ENCODE measurements at regions of chr6 and their contacts with region 1.

Region 1: GRCh38 chr6:39302669-39303424 is 11.4 kb downstream of the KCNK17 start:
- DNase-seq: peak; percentile 82 to 91
- ATAC-seq: peak; percentile 93 to 100 (median 100)
- H3K4me3 ChIP-seq: no peak overlapping the region
- H3K4me3 Mint-ChIP-seq: peak overlapping the region; percentile 57
- H3K27ac ChIP-seq: no peak overlapping the region
- H3K27ac Mint-ChIP-seq: peak overlapping the region in 1 of 2 donors; percentile 60
- H3K4me1 ChIP-seq: peaks cover 6% of the 10 kb centered on the region
- H3K4me1 Mint-ChIP-seq: peaks cover 0 to 11% of the 10 kb centered on the region in 2 donors
- H3K27me3 ChIP-seq: no peaks in the 10 kb centered on the region
- H3K27me3 Mint-ChIP-seq: peaks cover 0 to 2% of the 10 kb centered on the region in 2 donors
- CTCF ChIP-seq: peak; percentile 89

Region 2: GRCh38 chr6:39003072-39003471 is 299.8 kb before region 1 on chr6:
- intact Hi-C with region 1: loop called (anchors 2 kb)
- DNase-seq: no peak
- ATAC-seq: no peak
- H3K4me3 ChIP-seq: no peak overlapping the region
- H3K4me3 Mint-ChIP-seq: no peak overlapping the region
- H3K27ac ChIP-seq: no peak overlapping the region
- H3K27ac Mint-ChIP-seq: no peak overlapping the region
- H3K4me1 ChIP-seq: no peaks in the 10 kb centered on the region
- H3K4me1 Mint-ChIP-seq: no peaks in the 10 kb centered on the region
- H3K27me3 ChIP-seq: peaks cover 5% of the 10 kb centered on the region
- H3K27me3 Mint-ChIP-seq: peaks cover 38 to 46% of the 10 kb centered on the region in 2 donors
- CTCF ChIP-seq: peak; percentile 26

Region 3: DNA sequence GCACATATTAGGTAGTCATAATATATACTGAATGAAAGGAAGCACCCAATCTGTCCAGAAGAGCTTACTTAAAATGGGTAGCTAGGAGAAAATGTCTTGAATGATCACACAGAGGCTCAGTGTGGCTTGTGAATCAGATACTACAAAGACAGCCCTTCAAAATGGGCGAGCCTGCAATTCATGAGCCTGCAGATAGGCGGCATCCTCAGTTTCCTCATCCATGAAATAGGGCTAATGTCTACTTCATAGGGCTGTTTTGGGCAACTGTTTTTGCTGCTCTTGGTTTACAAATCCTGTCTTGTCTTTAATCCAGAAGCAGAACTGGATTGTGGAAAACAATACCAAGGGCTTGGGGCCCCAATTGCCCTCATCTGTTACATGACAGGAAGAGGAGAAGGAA is 149.0 kb after region 1 on chr6:
- intact Hi-C with region 1: no loop called
- DNase-seq: no peak
- ATAC-seq: no peak
- H3K4me3 ChIP-seq: no peak overlapping the region
- H3K4me3 Mint-ChIP-seq: no peak overlapping the region
- H3K27ac ChIP-seq: no peak overlapping the region
- H3K27ac Mint-ChIP-seq: no peak overlapping the region
- H3K4me1 ChIP-seq: no peaks in the 10 kb centered on the region
- H3K4me1 Mint-ChIP-seq: no peaks in the 10 kb centered on the region
- H3K27me3 ChIP-seq: no peaks in the 10 kb centered on the region
- H3K27me3 Mint-ChIP-seq: peaks cover 19 to 32% of the 10 kb centered on the region in 2 donors
- CTCF ChIP-seq: no peak

Measured in natural killer cell (primary cell).